GM10248 (cell line): ENCODE measurements at regions of chr4 and their contacts with region 1.

Region 1: DNA sequence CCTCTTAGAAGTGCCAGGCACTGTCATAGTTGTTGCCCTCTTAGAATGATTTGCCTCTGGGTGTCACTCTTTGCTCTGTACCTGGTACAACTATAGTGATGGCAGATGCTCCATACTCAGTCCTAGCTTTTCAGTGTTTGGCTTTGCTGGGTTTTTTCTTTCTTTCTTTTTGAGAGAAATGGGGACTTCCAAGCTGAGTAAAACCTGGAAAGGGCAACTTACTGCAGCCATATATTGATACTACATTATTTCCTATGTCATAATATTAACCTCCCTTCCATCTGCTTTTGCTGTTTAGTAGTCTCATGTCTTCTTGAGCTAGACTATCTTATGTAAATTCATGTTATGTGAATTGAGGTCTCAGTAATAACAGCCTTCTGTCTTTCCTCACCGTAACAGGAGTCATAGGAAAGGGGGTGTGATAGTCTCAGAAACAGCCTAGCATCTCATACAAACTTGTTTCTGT is 49.0 kb downstream of the NIPAL1 start:
- DNase-seq: peak; percentile 26
- CTCF ChIP-seq: no peak

Region 2: DNA sequence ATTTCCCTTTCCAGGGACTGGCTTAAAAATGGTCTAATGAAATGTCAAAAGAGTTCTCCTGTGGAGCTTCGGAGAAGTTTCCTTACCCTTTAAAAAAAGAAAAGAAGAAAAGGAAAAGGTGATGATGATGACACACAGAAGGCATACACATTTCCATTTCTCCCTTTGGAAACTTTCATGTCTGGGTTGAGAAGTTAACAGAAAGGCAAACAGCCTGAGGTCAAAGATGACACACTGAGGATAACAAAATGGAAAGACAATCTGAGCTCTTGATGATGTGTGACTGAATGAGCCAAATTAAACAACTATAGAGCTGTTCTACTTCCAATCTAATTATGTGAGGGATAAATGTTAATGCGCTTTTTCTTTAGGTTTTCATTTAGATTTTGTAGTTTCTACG is 183.4 kb before region 1 on chr4:
- CTCF ChIA-PET with region 1: no interaction called
- POLR2A ChIA-PET with region 1: no interaction called
- DNase-seq: no peak
- CTCF ChIP-seq: no peak

Region 3: GRCh38 chr4:48047421-48047844 is 18.2 kb before region 1 on chr4:
- CTCF ChIA-PET with region 1: interaction called, 26 read pairs
- POLR2A ChIA-PET with region 1: no interaction called
- DNase-seq: peak; percentile 67
- CTCF ChIP-seq: no peak